ENCODE measurements at regions of chr16 and their contacts with region 1.

Region 1: GRCh38 chr16:46908540-46909372 is 24.6 kb downstream of the GPT2 start:
- DNase-seq: peak; percentile 68
- ATAC-seq: peak; percentile 49
- H3K4me3 Mint-ChIP-seq: no peak overlapping the region
- H3K27ac Mint-ChIP-seq: no peak overlapping the region
- H3K4me1 Mint-ChIP-seq: peaks cover 13% of the 10 kb centered on the region
- H3K27me3 Mint-ChIP-seq: no peaks in the 10 kb centered on the region

Region 2: GRCh38 chr16:46883690-46884512 is 24.9 kb before region 1 on chr16 and contains the start of gene GPT2:
- CTCF ChIA-PET with region 1: interaction called, 14 read pairs
- POLR2A ChIA-PET with region 1: interaction called, 5 read pairs
- DNase-seq: peak; percentile 85
- ATAC-seq: peak; percentile 99
- H3K4me3 Mint-ChIP-seq: peak within 1 kb of the TSS; percentile 78
- H3K27ac Mint-ChIP-seq: peak within 1 kb of the TSS; percentile 71
- H3K4me1 Mint-ChIP-seq: peaks cover 15% of the 10 kb centered on the region
- H3K27me3 Mint-ChIP-seq: peaks cover 29% of the 10 kb centered on the region
- total RNA-seq, gene GPT2: 5.4 to 7.3 TPM

Region 3: GRCh38 chr16:47141773-47142485 is 233.2 kb after region 1 on chr16:
- CTCF ChIA-PET with region 1: no interaction called
- POLR2A ChIA-PET with region 1: no interaction called
- DNase-seq: peak; percentile 89
- ATAC-seq: peak; percentile 67
- H3K4me3 Mint-ChIP-seq: peak overlapping the region; percentile 69
- H3K27ac Mint-ChIP-seq: peak overlapping the region; percentile 37
- H3K4me1 Mint-ChIP-seq: peaks cover 23% of the 10 kb centered on the region
- H3K27me3 Mint-ChIP-seq: peaks cover 31% of the 10 kb centered on the region

Measured in activated CD8-positive, alpha-beta T cell treated with anti-CD3 and anti-CD28 coated beads, Interleukin-2, amount 10 ng/mL, durations not matched to agents 7 days and 5 days (primary cell).